Endothelial cell of umbilical vein (primary cell): ENCODE measurements at regions of chr7 and their contacts with region 1.

Region 1: GRCh38 chr7:21253740-21254687 is 173.9 kb upstream of the SP4 start:
- DNase-seq: peak; percentile 78
- H3K4me3 ChIP-seq: no peak overlapping the region
- H3K27ac ChIP-seq: no peak overlapping the region
- H3K4me1 ChIP-seq: no peaks in the 10 kb centered on the region
- H3K27me3 ChIP-seq: peaks cover 28 to 67% of the 10 kb centered on the region in 2 experiments
- CTCF ChIP-seq: peak; percentile 52 to 72
- POLR2A ChIP-seq: no peak

Region 2: GRCh38 chr7:19713676-19714075 is 1540.3 kb before region 1 on chr7:
- CTCF ChIA-PET with region 1: interaction called, 23 read pairs
- POLR2A ChIA-PET with region 1: no interaction called
- dilution Hi-C with region 1: no loop called
- intact Hi-C with region 1: no loop called
- DNase-seq: peak; percentile 62
- H3K4me3 ChIP-seq: no peak overlapping the region
- H3K27ac ChIP-seq: no peak overlapping the region
- H3K4me1 ChIP-seq: no peaks in the 10 kb centered on the region
- H3K27me3 ChIP-seq: peaks cover 10 to 29% of the 10 kb centered on the region in 2 experiments
- CTCF ChIP-seq: peak; percentile 20 to 39
- POLR2A ChIP-seq: no peak

Region 3: DNA sequence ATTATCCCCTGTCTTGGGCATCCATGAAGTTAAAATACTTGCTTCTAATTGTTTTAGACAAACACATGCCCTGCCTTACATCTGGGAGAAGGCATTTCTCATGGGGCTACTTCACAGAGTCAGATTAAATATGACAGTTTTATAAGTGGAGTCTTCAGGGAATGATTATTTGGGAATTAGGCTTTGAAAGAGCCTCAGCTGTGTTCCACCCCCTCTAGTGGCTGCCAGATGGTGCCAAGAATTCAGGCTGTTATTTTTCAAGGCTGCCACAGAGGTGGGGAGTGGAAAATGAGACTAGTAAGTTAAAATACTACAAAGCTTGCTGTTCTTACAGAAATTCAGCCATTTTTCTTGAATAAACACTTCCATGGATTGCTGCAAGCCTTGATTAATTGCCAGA is 243.1 kb after region 1 on chr7:
- CTCF ChIA-PET with region 1: interaction called, 10 read pairs
- POLR2A ChIA-PET with region 1: no interaction called
- dilution Hi-C with region 1: no loop called
- intact Hi-C with region 1: no loop called
- DNase-seq: no peak
- H3K4me3 ChIP-seq: no peak overlapping the region
- H3K27ac ChIP-seq: no peak overlapping the region
- H3K4me1 ChIP-seq: no peaks in the 10 kb centered on the region
- H3K27me3 ChIP-seq: no peaks in the 10 kb centered on the region
- CTCF ChIP-seq: peak in 1 of 2 donors; percentile 13
- POLR2A ChIP-seq: no peak

Region 4: GRCh38 chr7:21568762-21569161 is 314.7 kb after region 1 on chr7:
- CTCF ChIA-PET with region 1: interaction called, 5 read pairs
- POLR2A ChIA-PET with region 1: no interaction called
- dilution Hi-C with region 1: no loop called
- intact Hi-C with region 1: loop called (anchors 5 kb)
- DNase-seq: peak; percentile 15
- H3K4me3 ChIP-seq: no peak overlapping the region
- H3K27ac ChIP-seq: no peak overlapping the region
- H3K4me1 ChIP-seq: no peaks in the 10 kb centered on the region
- H3K27me3 ChIP-seq: peaks cover 7 to 10% of the 10 kb centered on the region in 2 experiments
- CTCF ChIP-seq: peak in 1 of 2 donors; percentile 5
- POLR2A ChIP-seq: no peak

Region 5: GRCh38 chr7:22499044-22499443 is 1245.0 kb after region 1 on chr7:
- CTCF ChIA-PET with region 1: no interaction called
- POLR2A ChIA-PET with region 1: no interaction called
- dilution Hi-C with region 1: no loop called
- intact Hi-C with region 1: loop called (anchors 5 kb)
- DNase-seq: no peak
- H3K4me3 ChIP-seq: peak overlapping the region in 2 of 3 experiments; percentile 40 to 43
- H3K27ac ChIP-seq: peak overlapping the region; percentile 90
- H3K4me1 ChIP-seq: peaks cover 39% of the 10 kb centered on the region
- H3K27me3 ChIP-seq: no peaks in the 10 kb centered on the region
- CTCF ChIP-seq: no peak
- POLR2A ChIP-seq: peak; percentile 43